Activated CD4-positive, alpha-beta memory T cell treated with anti-CD3 and anti-CD28 coated beads for 36 hours (primary cell): ENCODE measurements at regions of chr13 and their contacts with region 1.

Region 1: DNA sequence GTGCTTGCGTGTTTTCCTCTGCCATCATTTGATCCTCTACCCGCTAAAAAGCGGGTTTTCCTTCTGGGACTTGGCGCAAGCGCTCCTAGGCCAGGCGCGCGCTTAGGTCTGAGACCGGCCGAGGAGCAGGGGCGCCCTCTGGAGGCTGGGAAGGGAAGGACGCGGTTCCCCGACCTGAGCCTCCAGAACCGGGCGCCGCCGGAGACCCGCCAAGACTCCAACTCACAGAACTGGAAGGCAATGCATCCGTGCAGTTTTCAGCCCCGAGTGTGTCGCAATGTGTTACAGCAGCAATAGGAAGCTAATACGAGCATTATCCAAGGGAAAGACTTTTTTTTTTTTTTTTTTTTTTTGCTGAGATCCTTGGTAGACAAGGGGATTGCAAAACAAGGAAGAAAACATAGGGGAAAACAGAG is 190.9 kb downstream of the COL4A1 start:
- DNase-seq: peak; percentile 65
- H3K4me3 Mint-ChIP-seq: no peak overlapping the region
- H3K27ac Mint-ChIP-seq: no peak overlapping the region
- H3K4me1 Mint-ChIP-seq: no peaks in the 10 kb centered on the region
- H3K27me3 Mint-ChIP-seq: peaks cover 27% of the 10 kb centered on the region

Region 2: GRCh38 chr13:108961542-108962125 is 1154.4 kb before region 1 on chr13:
- CTCF ChIA-PET with region 1: interaction called, 4 read pairs
- POLR2A ChIA-PET with region 1: no interaction called
- intact Hi-C with region 1: loop called (anchors 1 kb)
- DNase-seq: no peak
- H3K4me3 Mint-ChIP-seq: no peak overlapping the region
- H3K27ac Mint-ChIP-seq: no peak overlapping the region
- H3K4me1 Mint-ChIP-seq: peaks cover 2% of the 10 kb centered on the region
- H3K27me3 Mint-ChIP-seq: no peaks in the 10 kb centered on the region

Region 3: DNA sequence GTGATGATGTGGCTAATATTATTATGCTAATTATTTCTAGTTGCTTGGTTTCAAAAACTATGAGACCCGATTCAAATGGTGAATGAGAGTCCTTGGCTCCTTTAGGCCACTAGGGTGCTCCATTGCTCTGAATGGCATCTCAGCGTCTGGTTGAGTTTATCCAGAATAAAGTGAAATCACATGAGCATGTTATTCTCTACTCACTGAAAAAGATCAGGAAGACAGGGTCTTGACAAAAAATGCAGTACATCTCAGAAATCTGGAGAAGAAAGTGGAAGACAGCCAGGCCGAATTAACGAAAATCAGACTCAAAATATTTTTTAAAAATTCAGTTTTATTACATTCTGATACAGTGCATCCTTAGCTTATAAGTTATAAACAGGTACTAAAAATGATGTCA is 970.4 kb before region 1 on chr13:
- CTCF ChIA-PET with region 1: no interaction called
- POLR2A ChIA-PET with region 1: no interaction called
- intact Hi-C with region 1: loop called (anchors 10 kb)
- DNase-seq: peak; percentile 18
- H3K4me3 Mint-ChIP-seq: no peak overlapping the region
- H3K27ac Mint-ChIP-seq: no peak overlapping the region
- H3K4me1 Mint-ChIP-seq: no peaks in the 10 kb centered on the region
- H3K27me3 Mint-ChIP-seq: peaks cover 11% of the 10 kb centered on the region

Region 4: DNA sequence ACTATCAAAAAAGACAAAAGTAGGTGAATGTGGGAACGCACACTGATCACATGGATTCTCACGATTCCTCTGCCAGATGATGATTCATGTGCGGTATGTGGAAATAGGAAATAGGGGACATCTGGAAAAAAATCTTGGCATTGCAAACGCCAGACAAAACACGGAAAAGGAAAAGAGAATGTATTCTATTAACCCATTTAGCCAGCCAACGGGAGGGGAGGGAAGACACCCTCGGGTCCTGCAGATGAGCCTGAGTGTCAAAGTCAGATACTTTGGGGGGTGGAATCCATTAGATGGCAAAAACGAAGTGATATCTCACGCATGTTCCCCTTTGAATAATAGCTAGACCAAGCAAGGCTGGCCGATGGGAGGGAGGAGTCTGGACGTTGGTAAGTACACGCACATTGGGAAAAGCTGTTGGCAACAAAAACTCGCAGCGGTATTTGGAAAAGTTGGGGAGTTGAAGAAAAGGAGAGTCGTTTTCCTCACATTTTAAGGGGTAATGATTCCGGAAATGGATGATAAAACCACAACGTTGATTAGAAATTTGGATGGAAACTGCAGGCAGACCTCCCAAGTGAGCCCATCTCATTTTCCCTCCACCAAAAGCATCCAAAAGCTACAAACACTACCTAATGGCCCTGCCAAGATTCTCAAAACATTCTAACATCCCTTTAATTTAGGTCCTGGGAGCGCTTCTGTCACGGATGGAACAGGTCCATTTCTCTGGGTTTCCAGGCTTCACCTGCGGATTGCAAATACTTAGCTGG is 117.3 kb after region 1 on chr13:
- CTCF ChIA-PET with region 1: no interaction called
- POLR2A ChIA-PET with region 1: no interaction called
- intact Hi-C with region 1: no loop called
- DNase-seq: no peak
- H3K4me3 Mint-ChIP-seq: no peak overlapping the region
- H3K27ac Mint-ChIP-seq: no peak overlapping the region
- H3K4me1 Mint-ChIP-seq: no peaks in the 10 kb centered on the region
- H3K27me3 Mint-ChIP-seq: peaks cover 29% of the 10 kb centered on the region